Uterus (tissue), 4 donors: ENCODE measurements at regions of chr12 and their contacts with region 1.

Region 1: GRCh38 chr12:91355150-91356006 is 172.8 kb upstream of the DCN start:
- DNase-seq: peak; percentile 78 to 80
- H3K4me3 ChIP-seq: no peak overlapping the region
- H3K27ac ChIP-seq: no peak overlapping the region
- H3K4me1 ChIP-seq: no peaks in the 10 kb centered on the region
- H3K27me3 ChIP-seq: no peaks in the 10 kb centered on the region
- CTCF ChIP-seq: peak; percentile 78 to 89 (median 86)
- POLR2A ChIP-seq: no peak

Region 2: GRCh38 chr12:90978117-90978770 is 377.1 kb before region 1 on chr12:
- intact Hi-C with region 1: loop called (anchors 10 kb)
- DNase-seq: peak in 1 of 2 donors; percentile 21
- H3K4me3 ChIP-seq: no peak overlapping the region
- H3K27ac ChIP-seq: peak overlapping the region; percentile 69 to 71
- H3K4me1 ChIP-seq: no peaks in the 10 kb centered on the region
- H3K27me3 ChIP-seq: no peaks in the 10 kb centered on the region
- CTCF ChIP-seq: peak; percentile 73 to 93 (median 77)
- POLR2A ChIP-seq: no peak

Region 3: DNA sequence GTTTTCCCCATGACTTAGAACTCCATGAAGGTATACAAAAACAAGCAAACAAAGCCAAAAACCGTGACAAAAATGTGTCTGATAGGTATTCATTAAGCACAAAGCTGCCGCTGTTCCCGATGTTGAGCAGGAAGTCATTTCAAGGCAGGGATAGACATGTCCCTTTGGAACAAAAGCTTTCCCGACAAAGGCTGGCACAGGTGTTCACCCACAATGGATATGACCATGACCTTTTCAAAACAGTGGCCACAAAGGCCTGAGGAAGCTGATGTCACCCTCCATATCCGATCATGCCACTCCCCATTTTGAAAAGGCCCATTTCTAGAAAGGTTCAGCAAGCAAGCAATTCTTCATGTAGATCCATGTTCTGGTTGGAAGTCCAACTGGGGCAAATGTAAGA is 511.2 kb after region 1 on chr12:
- intact Hi-C with region 1: no loop called
- DNase-seq: peak in 1 of 2 donors; percentile 27
- H3K4me3 ChIP-seq: no peak overlapping the region
- H3K27ac ChIP-seq: no peak overlapping the region
- H3K4me1 ChIP-seq: no peaks in the 10 kb centered on the region
- H3K27me3 ChIP-seq: no peaks in the 10 kb centered on the region
- CTCF ChIP-seq: no peak
- POLR2A ChIP-seq: no peak